ENCODE measurements at regions of chr13 and their contacts with region 1.

Region 1: DNA sequence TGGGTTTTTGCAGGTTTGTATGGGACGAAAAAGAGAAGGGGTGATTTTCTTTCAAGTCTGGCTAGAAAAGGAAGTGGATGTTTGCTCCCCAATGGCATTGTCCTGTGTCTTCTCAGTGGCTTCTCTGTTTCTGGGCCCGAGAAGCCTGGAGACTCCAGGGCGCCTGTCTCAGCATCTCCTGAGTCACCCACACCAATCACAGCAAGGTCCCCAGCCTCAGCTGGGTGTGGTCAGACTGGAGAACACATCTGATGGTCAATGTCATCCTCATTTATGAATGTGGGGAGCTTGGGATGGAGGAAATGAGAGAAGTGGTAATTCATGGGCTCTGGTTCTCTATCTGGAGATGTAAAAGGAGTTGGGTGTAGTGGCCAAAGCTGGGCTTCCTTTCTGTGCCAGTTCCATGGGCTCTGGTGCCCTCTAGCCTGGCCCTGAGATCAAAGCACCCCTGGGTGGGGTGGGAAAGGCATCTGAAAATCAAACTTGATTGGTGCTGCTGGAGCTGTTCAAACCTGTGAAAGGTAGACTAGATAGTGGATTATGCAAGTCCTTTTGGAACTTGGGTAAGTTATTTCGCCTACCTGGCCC is 13.4 kb downstream of the RASL11A start:
- DNase-seq: peak; percentile 53
- H3K4me3 ChIP-seq: no peak overlapping the region
- H3K27ac ChIP-seq: no peak overlapping the region
- H3K4me1 ChIP-seq: peaks cover 8% of the 10 kb centered on the region
- CTCF ChIP-seq: peak; percentile 72

Region 2: GRCh38 chr13:26557393-26558023 is 726.5 kb before region 1 on chr13 and contains the start of gene WASF3:
- CTCF ChIA-PET with region 1: no interaction called
- POLR2A ChIA-PET with region 1: no interaction called
- intact Hi-C with region 1: no loop called
- DNase-seq: peak; percentile 60
- H3K4me3 ChIP-seq: peak within 1 kb of the TSS; percentile 52
- H3K27ac ChIP-seq: no peak within 1 kb of the TSS
- H3K4me1 ChIP-seq: no peaks in the 10 kb centered on the region
- CTCF ChIP-seq: no peak
- total RNA-seq, gene WASF3: 0.19 and 0.26 TPM in 2 replicates

Region 3: GRCh38 chr13:26985285-26985878 is 298.6 kb before region 1 on chr13:
- CTCF ChIA-PET with region 1: interaction called, 6 read pairs
- POLR2A ChIA-PET with region 1: no interaction called
- intact Hi-C with region 1: loop called (anchors 1 kb)
- DNase-seq: peak; percentile 82
- H3K4me3 ChIP-seq: no peak overlapping the region
- H3K27ac ChIP-seq: no peak overlapping the region
- H3K4me1 ChIP-seq: no peaks in the 10 kb centered on the region
- CTCF ChIP-seq: peak; percentile 94

Measured in OCI-LY7 (cell line).